Activated CD4-positive, alpha-beta memory T cell treated with anti-CD3 and anti-CD28 coated beads, Interleukin-2, amount 10 ng/mL, durations not matched to agents 7 days and 5 days (primary cell): ENCODE measurements at regions of chr12 and their contacts with region 1.

Region 1: DNA sequence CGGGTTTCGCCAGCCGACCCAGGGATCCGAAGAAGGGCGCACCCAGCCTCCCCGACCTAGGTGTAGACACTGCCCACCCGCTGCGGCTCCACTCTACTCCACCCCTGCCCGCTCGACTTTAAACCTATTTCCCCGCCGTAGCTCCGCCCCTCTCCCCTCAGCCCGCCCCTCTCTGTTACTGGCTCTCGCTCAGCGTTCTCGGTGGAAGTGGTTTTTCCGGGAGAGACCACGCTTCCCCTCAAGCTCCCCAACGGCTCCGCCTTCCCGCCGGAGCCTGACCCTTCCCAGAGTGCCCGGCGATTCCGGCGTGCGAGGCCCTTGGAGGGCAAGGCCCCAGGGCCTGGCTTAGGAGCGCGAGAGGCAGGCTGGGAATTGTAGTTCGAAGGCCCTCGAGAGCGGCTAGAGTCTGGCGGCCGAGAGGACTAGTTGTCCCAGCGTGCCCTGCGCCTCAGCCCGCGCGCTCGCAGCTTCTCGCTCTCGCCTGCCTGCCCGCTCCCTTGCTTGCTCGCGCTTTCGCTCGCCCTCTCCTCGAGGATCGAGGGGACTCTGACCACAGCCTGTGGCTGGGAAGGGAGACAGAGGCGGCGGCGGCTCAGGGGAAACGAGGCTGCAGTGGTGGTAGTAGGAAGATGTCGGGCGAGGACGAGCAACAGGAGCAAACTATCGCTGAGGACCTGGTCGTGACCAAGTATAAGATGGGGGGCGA is at the start of gene PA2G4:
- DNase-seq: peak; percentile 99
- H3K4me3 Mint-ChIP-seq: peak within 1 kb of the TSS; percentile 99
- H3K27ac Mint-ChIP-seq: peak within 1 kb of the TSS; percentile 98
- H3K4me1 Mint-ChIP-seq: peaks cover 53% of the 10 kb centered on the region
- H3K27me3 Mint-ChIP-seq: no peaks in the 10 kb centered on the region
- total RNA-seq, gene PA2G4: 242 to 243 TPM

Region 2: GRCh38 chr12:55926738-55927587 is 177.3 kb before region 1 on chr12:
- CTCF ChIA-PET with region 1: interaction called, 6 read pairs
- POLR2A ChIA-PET with region 1: interaction called, 28 read pairs
- DNase-seq: peak; percentile 95
- H3K4me3 Mint-ChIP-seq: peak overlapping the region; percentile 91
- H3K27ac Mint-ChIP-seq: peak overlapping the region; percentile 96
- H3K4me1 Mint-ChIP-seq: peaks cover 53% of the 10 kb centered on the region
- H3K27me3 Mint-ChIP-seq: no peaks in the 10 kb centered on the region

Region 3: GRCh38 chr12:56078990-56079664 is 25.1 kb before region 1 on chr12:
- CTCF ChIA-PET with region 1: interaction called, 60 read pairs
- POLR2A ChIA-PET with region 1: interaction called, 36 read pairs
- DNase-seq: peak; percentile 65
- H3K4me3 Mint-ChIP-seq: peak overlapping the region; percentile 74
- H3K27ac Mint-ChIP-seq: no peak overlapping the region
- H3K4me1 Mint-ChIP-seq: peaks cover 15% of the 10 kb centered on the region
- H3K27me3 Mint-ChIP-seq: peaks cover 31% of the 10 kb centered on the region

Region 4: GRCh38 chr12:56127888-56128669 is 23.8 kb after region 1 on chr12 and contains the start of gene ESYT1:
- CTCF ChIA-PET with region 1: interaction called, 10 read pairs
- POLR2A ChIA-PET with region 1: interaction called, 36 read pairs
- DNase-seq: peak; percentile 99
- H3K4me3 Mint-ChIP-seq: peak within 1 kb of the TSS; percentile 97
- H3K27ac Mint-ChIP-seq: peak within 1 kb of the TSS; percentile 94
- H3K4me1 Mint-ChIP-seq: peaks cover 75% of the 10 kb centered on the region
- H3K27me3 Mint-ChIP-seq: no peaks in the 10 kb centered on the region
- total RNA-seq, gene ESYT1: 266 to 279 TPM

Region 5: DNA sequence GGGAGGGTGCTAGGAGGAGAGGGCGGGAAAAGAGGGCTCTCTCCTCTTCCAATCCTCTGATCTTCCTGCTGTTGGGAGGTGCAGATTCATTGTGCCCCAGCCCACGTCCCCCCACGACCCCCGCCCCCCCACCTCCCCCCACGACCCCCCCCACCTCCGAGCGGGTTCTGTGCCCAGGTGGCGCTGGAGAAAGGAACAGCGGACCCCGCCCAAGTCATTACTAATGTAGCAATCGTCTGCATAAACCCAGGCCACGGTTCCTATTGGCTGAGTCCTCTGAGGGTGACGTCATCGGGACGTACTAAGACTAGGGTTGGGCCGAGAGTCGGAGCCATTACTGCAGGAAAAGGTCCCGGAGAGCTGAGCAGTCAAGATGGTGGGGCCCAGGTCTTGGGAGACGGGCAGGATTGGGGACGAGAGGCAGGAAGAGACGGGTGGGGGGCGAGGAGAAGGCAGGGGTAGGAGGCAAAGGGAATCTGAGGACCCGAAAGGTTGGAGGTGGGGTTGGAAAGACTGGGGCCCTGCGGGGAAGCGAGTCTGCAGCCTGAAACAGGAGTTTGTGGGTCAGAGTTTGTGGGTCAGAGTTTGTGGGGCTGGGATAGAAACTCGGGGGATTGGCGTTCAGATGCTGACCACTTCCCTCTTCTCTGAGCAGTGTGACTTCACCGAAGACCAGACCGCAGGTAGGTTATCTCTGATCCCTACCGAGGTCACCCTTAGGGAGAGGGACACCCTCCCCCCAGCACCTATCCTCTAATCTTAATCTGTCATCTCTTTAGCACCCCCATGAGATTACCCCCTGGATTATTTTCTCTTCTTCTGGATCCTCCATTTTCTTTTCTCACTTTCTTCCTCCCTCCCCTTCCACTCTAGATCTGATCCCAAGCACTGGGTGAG is 54.0 kb after region 1 on chr12 and contains the start of gene MYL6:
- CTCF ChIA-PET with region 1: interaction called, 4 read pairs
- POLR2A ChIA-PET with region 1: interaction called, 13 read pairs
- DNase-seq: peak; percentile 94
- H3K4me3 Mint-ChIP-seq: peak within 1 kb of the TSS; percentile 91
- H3K27ac Mint-ChIP-seq: peak within 1 kb of the TSS; percentile 90
- H3K4me1 Mint-ChIP-seq: peaks cover 59% of the 10 kb centered on the region
- H3K27me3 Mint-ChIP-seq: no peaks in the 10 kb centered on the region
- total RNA-seq, gene MYL6: 1,594 to 1,602 TPM